ENCODE measurements at regions of chr11 and their contacts with region 1.

Region 1: GRCh38 chr11:113904379-113905101 is at the start of gene HTR3B:
- H3K4me3 Mint-ChIP-seq: no peak within 1 kb of the TSS
- H3K27ac Mint-ChIP-seq: no peak within 1 kb of the TSS
- H3K4me1 Mint-ChIP-seq: no peaks in the 10 kb centered on the region
- H3K27me3 Mint-ChIP-seq: peaks cover 13% of the 10 kb centered on the region

Region 2: GRCh38 chr11:113764527-113765219 is 139.9 kb before region 1 on chr11:
- intact Hi-C with region 1: no loop called
- H3K4me3 Mint-ChIP-seq: no peak overlapping the region
- H3K27ac Mint-ChIP-seq: no peak overlapping the region
- H3K4me1 Mint-ChIP-seq: peaks cover 17% of the 10 kb centered on the region
- H3K27me3 Mint-ChIP-seq: no peaks in the 10 kb centered on the region

Region 3: DNA sequence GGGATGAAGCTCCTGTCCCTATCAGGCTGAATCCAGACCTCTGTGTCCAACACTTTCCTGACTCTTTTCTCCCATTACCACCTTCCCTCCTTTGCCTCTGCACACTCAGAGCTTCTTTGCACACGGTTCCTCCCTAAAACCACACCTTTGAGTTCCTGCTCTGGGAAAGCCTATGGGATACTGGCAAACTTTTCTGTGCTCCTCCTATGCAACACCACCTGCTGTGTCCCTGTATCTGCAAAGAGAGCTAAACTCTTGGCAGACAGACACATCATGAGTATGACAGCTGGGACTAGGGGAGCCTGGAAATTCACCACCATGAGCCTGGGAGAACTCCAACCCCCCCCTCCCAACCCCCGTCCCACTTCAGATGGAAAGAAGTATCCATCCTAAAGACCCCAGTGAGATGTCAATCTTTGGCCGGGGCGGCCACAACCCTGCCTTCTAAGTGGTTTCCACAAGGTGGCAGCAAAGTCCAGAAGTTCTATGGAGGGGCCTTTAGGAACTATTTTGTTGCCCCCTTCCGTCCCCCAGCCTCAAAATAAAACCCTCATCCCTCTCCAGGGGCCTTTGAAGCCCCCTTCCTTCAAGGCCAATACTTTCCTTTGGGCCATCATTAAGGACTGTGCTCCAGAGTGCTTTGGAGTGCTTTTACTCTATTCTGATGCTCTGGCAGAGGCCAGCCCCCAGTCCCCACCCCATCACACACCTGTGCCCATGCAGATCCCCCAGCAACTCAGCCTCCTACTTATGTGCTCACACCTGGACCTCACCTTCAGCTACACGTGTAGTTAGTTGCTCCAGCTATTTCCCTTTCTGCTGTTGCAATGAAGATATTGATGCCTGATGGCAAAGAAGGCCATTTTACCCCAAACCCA is 89.8 kb after region 1 on chr11:
- intact Hi-C with region 1: loop called (anchors 5 kb)
- H3K4me3 Mint-ChIP-seq: no peak overlapping the region
- H3K27ac Mint-ChIP-seq: no peak overlapping the region
- H3K4me1 Mint-ChIP-seq: no peaks in the 10 kb centered on the region
- H3K27me3 Mint-ChIP-seq: peaks cover 15% of the 10 kb centered on the region

Region 4: DNA sequence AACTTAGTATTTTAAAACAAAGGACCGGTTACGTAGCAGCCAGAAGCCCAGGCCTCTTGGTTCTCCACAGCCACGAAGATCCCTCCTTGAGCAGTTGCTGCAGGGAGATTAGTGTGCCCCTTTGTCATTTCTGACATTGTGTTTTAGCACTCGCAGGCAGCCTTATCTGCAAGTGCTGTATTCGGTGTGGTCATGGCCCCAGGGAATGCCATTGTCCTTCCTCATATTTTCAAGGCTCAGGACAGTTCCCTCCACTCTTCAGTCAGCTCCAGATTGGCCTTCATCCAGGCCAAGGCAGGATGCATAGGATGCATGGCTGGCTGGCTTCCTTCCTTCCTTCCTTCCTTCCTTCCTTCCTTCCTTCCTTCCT is 243.5 kb after region 1 on chr11:
- intact Hi-C with region 1: no loop called
- H3K4me3 Mint-ChIP-seq: no peak overlapping the region
- H3K27ac Mint-ChIP-seq: no peak overlapping the region
- H3K4me1 Mint-ChIP-seq: peaks cover 15% of the 10 kb centered on the region
- H3K27me3 Mint-ChIP-seq: no peaks in the 10 kb centered on the region

Measured in dendritic cell treated with granulocyte-macrophage colony-stimulating factor and Interleukin-4, amounts not matched to agents 40 ng/mL and 50 ng/mL, for 4 days (primary cell).